Endothelial cell of umbilical vein (primary cell): ENCODE measurements at regions of chr3 and their contacts with region 1.

Region 1: GRCh38 chr3:96466441-96466840 is 348.0 kb upstream of the EPHA6 start:
- DNase-seq: no peak
- H3K4me3 ChIP-seq: no peak overlapping the region
- H3K27ac ChIP-seq: no peak overlapping the region
- H3K4me1 ChIP-seq: no peaks in the 10 kb centered on the region
- H3K27me3 ChIP-seq: no peaks in the 10 kb centered on the region
- CTCF ChIP-seq: no peak
- POLR2A ChIP-seq: no peak

Region 2: GRCh38 chr3:96200897-96201296 is 265.5 kb before region 1 on chr3:
- CTCF ChIA-PET with region 1: no interaction called
- POLR2A ChIA-PET with region 1: no interaction called
- dilution Hi-C with region 1: no loop called
- intact Hi-C with region 1: no loop called
- DNase-seq: no peak
- H3K4me3 ChIP-seq: no peak overlapping the region
- H3K27ac ChIP-seq: no peak overlapping the region
- H3K4me1 ChIP-seq: no peaks in the 10 kb centered on the region
- H3K27me3 ChIP-seq: no peaks in the 10 kb centered on the region
- CTCF ChIP-seq: no peak
- POLR2A ChIP-seq: no peak

Region 3: DNA sequence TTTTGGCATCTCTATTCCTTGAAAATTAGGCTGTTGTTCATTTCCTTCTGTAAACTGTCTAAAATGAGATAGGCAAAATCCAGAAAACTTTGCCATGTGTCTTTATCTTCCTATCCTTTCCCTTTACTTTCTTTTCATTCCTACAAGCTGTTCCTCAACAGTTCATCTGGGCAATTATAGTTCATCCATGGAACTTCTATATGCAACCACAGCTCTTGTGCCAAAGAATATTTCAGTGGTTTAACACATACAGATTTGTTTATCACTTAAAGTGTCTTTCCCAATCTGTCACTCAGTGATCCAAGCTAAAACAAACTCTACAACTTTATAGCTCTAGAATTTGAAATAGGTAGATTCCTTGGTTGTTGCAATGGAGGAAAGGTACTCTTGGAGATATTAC is 117.6 kb after region 1 on chr3:
- CTCF ChIA-PET with region 1: no interaction called
- POLR2A ChIA-PET with region 1: no interaction called
- dilution Hi-C with region 1: no loop called
- intact Hi-C with region 1: loop called (anchors 5 kb)
- DNase-seq: no peak
- H3K4me3 ChIP-seq: no peak overlapping the region
- H3K27ac ChIP-seq: no peak overlapping the region
- H3K4me1 ChIP-seq: no peaks in the 10 kb centered on the region
- H3K27me3 ChIP-seq: no peaks in the 10 kb centered on the region
- CTCF ChIP-seq: no peak
- POLR2A ChIP-seq: no peak